ENCODE measurements at regions of chr1 and their contacts with region 1.

Region 1: DNA sequence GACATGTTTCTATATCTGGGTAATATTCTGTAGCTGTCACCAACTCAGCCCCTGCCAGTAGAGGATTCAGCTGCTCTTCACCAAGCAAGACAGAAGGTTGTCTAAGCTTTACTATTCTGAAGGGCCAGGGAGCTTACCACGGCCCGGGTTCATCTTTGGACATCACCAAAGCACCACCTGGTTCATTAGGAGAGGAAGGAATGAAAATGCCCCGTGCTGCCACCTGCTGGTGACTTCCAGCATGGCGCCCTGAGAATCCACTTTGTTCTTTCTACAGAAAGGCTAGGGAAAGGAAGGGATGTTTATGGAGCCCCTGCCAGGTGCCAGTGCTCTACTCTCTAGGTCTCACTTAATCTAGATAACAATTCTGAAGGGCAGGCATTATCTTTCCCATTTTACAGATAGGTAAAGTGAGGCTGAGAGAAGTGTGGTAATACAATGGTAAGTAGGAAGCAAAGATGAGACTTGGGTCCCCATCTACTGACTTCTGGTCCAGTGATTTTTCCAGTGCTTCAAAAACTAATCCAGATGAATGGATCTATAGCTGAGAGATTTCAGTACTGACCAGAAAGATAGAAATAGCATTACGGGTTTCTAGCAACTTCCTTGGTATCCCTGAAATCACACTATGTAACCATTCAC is 79.5 kb downstream of the BEND5 start:
- H3K4me3 ChIP-seq: no peak overlapping the region
- H3K27ac ChIP-seq: no peak overlapping the region
- H3K4me1 ChIP-seq: no peaks in the 10 kb centered on the region
- CTCF ChIP-seq: peak; percentile 41; the same call in 1 of the 2 replicates

Region 2: DNA sequence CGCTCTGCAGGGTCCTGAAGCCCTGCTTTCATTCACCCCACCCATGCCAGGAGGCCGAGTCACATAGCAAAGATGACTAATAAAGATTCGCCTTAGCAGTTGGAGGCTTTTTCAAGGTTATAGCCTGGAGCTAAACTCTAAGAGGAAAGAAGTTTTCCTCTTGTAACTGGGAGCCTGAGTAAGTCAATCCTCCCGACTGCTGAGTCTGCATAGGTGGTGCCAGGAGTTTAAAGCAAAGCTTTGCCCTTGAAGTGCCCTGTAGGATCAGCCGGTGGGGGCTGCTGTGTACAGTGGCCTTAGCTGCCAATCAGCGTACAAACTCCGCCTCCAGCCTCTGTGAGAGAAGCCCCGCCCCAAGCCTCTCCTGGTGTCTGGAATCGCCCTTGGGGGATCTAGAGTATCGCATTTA is 77.7 kb before region 1 on chr1:
- CTCF ChIA-PET with region 1: no interaction called
- POLR2A ChIA-PET with region 1: no interaction called
- H3K4me3 ChIP-seq: no peak overlapping the region
- H3K27ac ChIP-seq: no peak overlapping the region
- H3K4me1 ChIP-seq: no peaks in the 10 kb centered on the region
- CTCF ChIP-seq: no peak

Region 3: GRCh38 chr1:48677306-48678287 is 19.6 kb before region 1 on chr1:
- CTCF ChIA-PET with region 1: interaction called, 41 read pairs
- POLR2A ChIA-PET with region 1: no interaction called
- H3K4me3 ChIP-seq: no peak overlapping the region
- H3K27ac ChIP-seq: no peak overlapping the region
- H3K4me1 ChIP-seq: no peaks in the 10 kb centered on the region
- CTCF ChIP-seq: peak; percentile 61; the same call in 1 of the 2 replicates

Region 4: DNA sequence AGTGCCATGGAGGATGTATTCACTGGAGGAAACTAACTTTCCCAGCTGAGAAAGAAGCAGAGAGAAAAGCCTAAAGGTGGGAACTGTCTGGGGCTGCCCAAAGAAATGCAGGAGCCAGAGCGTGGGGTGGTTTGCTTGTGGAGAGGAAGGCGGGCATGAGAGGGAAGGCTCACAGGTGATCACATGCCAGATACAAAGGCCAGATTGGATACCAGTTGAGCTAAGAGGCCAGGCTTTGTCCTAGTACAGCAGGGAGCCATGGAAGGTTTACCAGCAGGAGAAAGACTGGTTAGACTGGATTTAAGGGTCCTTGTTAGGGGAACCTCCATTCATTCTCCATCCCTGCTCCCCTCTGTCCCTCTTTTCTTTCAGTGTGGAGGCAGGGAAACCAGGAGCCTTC is 13.1 kb after region 1 on chr1:
- CTCF ChIA-PET with region 1: interaction called, 10 read pairs
- POLR2A ChIA-PET with region 1: no interaction called
- H3K4me3 ChIP-seq: no peak overlapping the region
- H3K27ac ChIP-seq: no peak overlapping the region
- H3K4me1 ChIP-seq: no peaks in the 10 kb centered on the region
- CTCF ChIP-seq: no peak